ENCODE measurements at regions of chr7 and their contacts with region 1.

Region 1: GRCh38 chr7:20598459-20599309 is 16.8 kb upstream of the ABCB5 start:
- ATAC-seq: peak; percentile 58 to 82 (median 73)
- H3K4me3 ChIP-seq: no peak overlapping the region
- H3K27ac ChIP-seq: no peak overlapping the region
- H3K4me1 ChIP-seq: no peaks in the 10 kb centered on the region

Region 2: GRCh38 chr7:19708397-19709248 is 890.1 kb before region 1 on chr7 and contains the start of gene POLR1F:
- in situ Hi-C with region 1: loop called in 4 of 9 experiments (anchors 25 kb)
- ATAC-seq: peak; percentile 95 to 99 (median 98)
- H3K4me3 ChIP-seq: peak within 1 kb of the TSS; percentile 66 to 94 (median 90)
- H3K27ac ChIP-seq: peak within 1 kb of the TSS; percentile 24 to 27
- H3K4me1 ChIP-seq: peaks cover 14 to 18% of the 10 kb centered on the region in 2 donors
- total RNA-seq, gene POLR1F: 9.7 to 20.5 (median 12.6) TPM

Region 3: DNA sequence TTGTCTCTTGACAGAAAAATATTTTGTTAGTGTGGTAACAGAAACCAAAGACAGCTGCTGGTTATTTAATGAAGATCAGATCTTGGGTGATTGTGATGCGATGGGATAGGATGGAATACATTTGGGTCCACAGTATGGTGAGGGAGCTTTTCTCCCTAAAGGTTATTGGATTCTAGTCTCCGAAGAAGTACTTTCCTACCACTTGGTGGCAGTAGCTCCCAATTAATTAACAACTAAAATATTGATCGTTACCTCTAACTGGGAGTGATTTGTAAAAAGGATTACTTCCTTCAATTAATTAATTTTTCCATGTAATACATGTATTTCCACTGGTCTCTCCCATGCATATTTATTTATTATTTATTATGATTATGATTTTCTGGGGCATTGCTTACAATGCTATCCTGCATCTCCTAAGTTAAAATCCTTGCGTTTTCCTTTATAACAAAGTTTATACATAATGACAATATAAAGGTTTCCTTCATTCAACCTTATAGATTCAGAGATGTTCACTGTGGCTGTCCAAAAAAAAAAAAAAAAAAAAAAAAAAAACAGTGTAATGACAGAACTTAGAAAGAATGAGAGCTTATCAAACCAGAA is 850.8 kb before region 1 on chr7:
- in situ Hi-C with region 1: loop called in 5 of 9 experiments (anchors 25 kb)
- ATAC-seq: peak in 6 of 8 experiments; percentile 22 to 49 (median 32)
- H3K4me3 ChIP-seq: no peak overlapping the region
- H3K27ac ChIP-seq: no peak overlapping the region
- H3K4me1 ChIP-seq: peaks cover 2 to 10% of the 10 kb centered on the region in 2 donors

Region 4: DNA sequence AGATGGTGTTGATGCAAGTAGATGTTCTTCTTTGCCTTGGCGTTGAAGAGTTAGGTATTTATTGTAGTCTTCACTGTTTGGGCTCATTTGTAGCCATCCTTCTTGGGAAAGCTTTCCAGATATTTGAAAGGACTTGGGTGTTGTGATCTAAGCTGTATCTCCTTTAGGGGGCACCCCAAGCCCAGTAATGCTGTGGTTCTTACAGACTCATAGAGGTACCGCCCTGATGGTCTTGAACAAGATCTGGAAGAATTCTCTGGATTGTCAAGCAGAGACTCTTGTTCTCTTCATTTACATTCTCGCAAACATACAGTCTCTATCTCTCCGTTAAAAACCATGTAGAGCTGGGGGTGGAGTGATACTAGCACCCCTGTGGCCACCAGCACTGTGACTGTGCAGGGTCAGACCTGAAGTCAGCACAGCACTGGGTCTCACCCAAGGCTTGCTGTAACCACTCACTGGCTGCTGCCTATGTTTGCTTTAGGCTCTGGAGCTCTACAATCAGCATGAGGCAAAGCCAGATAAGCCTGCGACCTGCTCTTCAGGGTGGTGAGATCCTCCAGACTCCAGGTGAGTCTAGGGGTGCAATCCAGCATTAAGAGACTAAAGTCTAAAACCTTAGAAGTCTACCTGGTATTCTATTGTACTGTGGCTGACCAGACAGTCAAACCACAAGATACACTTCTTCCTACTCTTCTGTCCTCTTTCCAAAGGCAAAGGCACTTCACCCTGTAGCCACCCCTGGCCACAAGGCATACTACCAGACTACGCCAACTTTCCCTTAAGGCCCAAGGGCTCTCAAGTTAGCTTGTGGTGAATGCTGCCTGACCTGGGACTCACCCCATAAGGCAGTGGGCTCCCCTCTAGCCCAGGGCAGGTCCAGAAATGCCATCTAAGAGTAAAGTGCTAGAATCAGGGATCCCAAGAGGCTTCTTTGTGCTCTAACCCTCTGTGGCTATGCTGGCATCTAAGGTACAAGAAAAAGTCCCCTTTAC is 615.5 kb before region 1 on chr7:
- in situ Hi-C with region 1: loop called in 3 of 9 experiments (anchors 10 to 25 kb)
- ATAC-seq: peak in 3 of 8 experiments; percentile 88 to 96 (median 95)
- H3K4me3 ChIP-seq: no peak overlapping the region
- H3K27ac ChIP-seq: no peak overlapping the region
- H3K4me1 ChIP-seq: no peaks in the 10 kb centered on the region

Region 5: GRCh38 chr7:20172736-20173334 is 425.8 kb before region 1 on chr7:
- in situ Hi-C with region 1: loop called in 1 of 9 experiments (anchors 25 kb)
- ATAC-seq: peak; percentile 80 to 100 (median 92)
- H3K4me3 ChIP-seq: no peak overlapping the region
- H3K27ac ChIP-seq: no peak overlapping the region
- H3K4me1 ChIP-seq: no peaks in the 10 kb centered on the region

Region 6: GRCh38 chr7:20310963-20311742 is 287.5 kb before region 1 on chr7:
- in situ Hi-C with region 1: loop called in 1 of 9 experiments (anchors 25 kb)
- ATAC-seq: peak in 2 of 8 experiments; percentile 20 to 39
- H3K4me3 ChIP-seq: no peak overlapping the region
- H3K27ac ChIP-seq: no peak overlapping the region
- H3K4me1 ChIP-seq: peaks cover 9 to 16% of the 10 kb centered on the region in 2 donors

Region 7: DNA sequence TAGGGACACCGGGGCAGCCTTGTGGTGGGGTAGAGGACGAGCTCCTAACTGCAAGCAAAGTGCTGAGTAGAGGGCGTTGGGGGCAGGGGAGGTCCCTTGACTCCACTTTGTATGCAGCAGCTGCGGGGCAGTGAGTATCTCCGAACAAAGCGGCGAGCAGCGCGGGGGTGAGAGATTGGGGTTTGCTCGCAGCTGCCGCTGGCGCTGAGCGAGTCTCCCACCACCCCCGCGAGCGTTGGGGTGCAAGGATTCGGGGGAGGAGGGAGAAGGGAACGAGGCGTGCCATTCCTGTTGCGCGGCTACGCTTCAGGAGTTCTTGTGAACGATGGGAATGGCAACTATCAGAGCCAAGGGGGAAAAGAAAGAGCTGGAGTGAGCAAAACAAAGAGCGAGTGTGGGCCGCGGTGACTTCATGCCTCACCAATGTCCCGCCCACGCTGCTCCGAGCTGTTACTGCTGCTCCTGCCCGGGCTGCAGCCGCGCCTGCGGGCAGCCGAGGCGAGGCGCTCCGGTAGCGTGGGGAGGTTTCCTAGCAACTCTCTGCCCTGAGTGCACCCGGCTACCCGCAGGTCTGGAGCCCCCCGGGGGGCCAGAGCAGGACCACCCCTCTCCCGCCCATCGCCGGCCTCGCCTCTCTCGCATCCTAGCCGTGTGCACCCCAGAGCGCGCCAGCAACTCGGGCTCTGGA is 268.3 kb before region 1 on chr7 and contains the start of gene ITGB8:
- in situ Hi-C with region 1: loop called in 1 of 9 experiments (anchors 25 kb)
- ATAC-seq: peak; percentile 77 to 84 (median 82)
- H3K4me3 ChIP-seq: peak within 1 kb of the TSS; percentile 46 to 87 (median 80)
- H3K27ac ChIP-seq: peak within 1 kb of the TSS; percentile 88 to 98
- H3K4me1 ChIP-seq: peaks cover 2 to 12% of the 10 kb centered on the region in 2 donors
- total RNA-seq, gene ITGB8: 4.8 to 133 (median 15.5) TPM